ENCODE measurements at regions of chr9 and their contacts with region 1.

Region 1: GRCh38 chr9:91422758-91423711 is 597 bp downstream of the NFIL3 start:
- DNase-seq: peak; percentile 96
- H3K4me3 ChIP-seq: peak overlapping the region; percentile 67 to 85 (median 78)
- H3K27ac ChIP-seq: peak overlapping the region; percentile 94 to 98 (median 96)
- H3K4me1 ChIP-seq: peaks cover 0 to 45% (median 32%) of the 10 kb centered on the region in 4 donors
- H3K27me3 ChIP-seq: no peaks in the 10 kb centered on the region
- CTCF ChIP-seq: peak in 2 of 4 experiments; percentile 12 to 16
- EP300 ChIP-seq: peak; percentile 91 to 100 (median 99)
- POLR2A ChIP-seq: peak; percentile 20 to 26

Region 2: DNA sequence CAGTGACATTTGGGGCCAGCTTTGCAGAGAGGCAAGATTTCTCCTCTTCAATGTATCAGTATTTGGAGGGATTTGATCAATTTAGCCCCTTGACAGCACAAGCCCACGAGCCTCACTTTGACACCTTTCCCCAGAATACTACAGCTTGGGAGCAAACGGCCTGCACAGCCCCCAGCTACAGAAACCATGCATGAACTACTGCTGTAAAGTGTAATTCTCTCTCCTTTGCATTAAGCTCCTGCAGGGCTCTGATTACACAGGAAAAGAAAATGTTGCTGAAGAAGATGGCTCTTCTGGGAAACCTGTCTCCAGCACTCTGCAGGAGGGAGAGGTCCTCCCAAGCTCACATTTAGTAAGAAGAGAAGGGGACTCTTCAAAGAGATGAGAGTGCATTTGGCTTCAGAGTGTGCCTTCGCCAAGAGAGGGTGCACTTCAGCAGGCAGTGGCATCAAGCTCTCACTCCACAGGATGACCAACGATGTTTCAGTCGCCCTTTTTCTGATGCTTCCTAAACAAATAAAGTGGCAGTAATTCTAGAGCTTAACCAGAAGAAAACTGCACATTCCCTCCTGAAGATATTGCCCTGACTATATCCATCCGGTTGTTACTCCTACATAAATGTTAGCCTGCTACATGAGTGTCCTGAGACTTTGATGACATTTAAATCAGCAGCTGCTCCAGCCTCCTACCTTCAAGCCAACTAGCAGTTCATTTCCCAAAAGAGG is 333.5 kb before region 1 on chr9:
- intact Hi-C with region 1: loop called (anchors 5 kb)
- DNase-seq: peak; percentile 74
- H3K4me3 ChIP-seq: no peak overlapping the region
- H3K27ac ChIP-seq: no peak overlapping the region
- H3K4me1 ChIP-seq: peaks cover 0 to 7% (median 0%) of the 10 kb centered on the region in 4 donors
- H3K27me3 ChIP-seq: no peaks in the 10 kb centered on the region
- CTCF ChIP-seq: peak; percentile 32 to 59 (median 37)
- EP300 ChIP-seq: no peak
- POLR2A ChIP-seq: no peak

Region 3: GRCh38 chr9:91193658-91194391 is 229.2 kb before region 1 on chr9:
- intact Hi-C with region 1: loop called (anchors 1 kb)
- DNase-seq: peak; percentile 94
- H3K4me3 ChIP-seq: peak overlapping the region; percentile 30 to 52 (median 48)
- H3K27ac ChIP-seq: peak overlapping the region; percentile 94 to 99 (median 96)
- H3K4me1 ChIP-seq: peaks cover 0 to 63% (median 62%) of the 10 kb centered on the region in 4 donors
- H3K27me3 ChIP-seq: no peaks in the 10 kb centered on the region
- CTCF ChIP-seq: no peak
- EP300 ChIP-seq: peak in 2 of 4 donors; percentile 56 to 66
- POLR2A ChIP-seq: peak; percentile 41 to 46

Region 4: DNA sequence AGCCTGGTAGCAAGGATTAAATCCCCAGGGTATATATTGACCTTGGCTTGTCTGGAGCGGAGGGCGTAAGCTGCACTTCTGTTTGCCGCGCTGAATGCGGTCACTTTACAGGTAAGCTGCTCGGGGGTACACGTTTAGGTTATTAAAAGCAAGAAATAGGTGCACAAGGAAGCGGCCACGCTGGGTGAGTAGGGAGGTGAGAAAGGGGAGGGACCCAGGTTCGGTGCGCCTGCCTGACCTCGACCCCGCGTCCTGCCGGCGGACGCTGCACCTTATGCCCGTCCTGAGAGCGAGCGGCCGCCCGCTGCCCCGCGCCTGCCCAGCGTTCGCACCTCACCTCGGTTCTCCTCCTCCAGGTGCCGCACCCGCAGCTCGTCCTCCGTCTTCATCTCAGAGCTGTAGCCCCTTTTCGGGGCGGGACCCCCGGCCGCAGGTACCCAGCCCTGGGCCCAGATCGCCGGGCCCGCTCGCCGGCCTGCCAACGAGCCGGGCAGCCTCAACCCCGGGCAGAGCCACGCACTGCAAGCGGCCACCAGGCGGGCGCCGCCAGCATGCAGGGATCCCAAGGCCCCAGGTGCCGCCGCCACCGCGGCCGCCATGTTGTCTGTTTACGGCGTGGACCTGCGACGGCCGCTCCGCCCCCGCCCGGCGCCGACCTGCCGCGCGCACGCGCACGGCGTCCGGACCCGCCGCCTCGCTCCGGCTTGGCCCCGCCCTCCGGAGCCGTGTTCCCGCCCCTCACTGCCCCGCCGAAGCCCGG is 61.6 kb before region 1 on chr9 and contains the start of gene AUH:
- intact Hi-C with region 1: loop called (anchors 2 kb)
- DNase-seq: peak; percentile 92
- H3K4me3 ChIP-seq: peak within 1 kb of the TSS; percentile 75 to 99 (median 98)
- H3K27ac ChIP-seq: peak within 1 kb of the TSS; percentile 89 to 90 (median 90)
- H3K4me1 ChIP-seq: peaks cover 0 to 36% (median 18%) of the 10 kb centered on the region in 4 donors
- H3K27me3 ChIP-seq: no peaks in the 10 kb centered on the region
- CTCF ChIP-seq: peak in 1 of 4 experiments; percentile 9
- EP300 ChIP-seq: no peak
- POLR2A ChIP-seq: no peak
- total RNA-seq, gene AUH: 27.1 to 36.4 (median 28.1) TPM

Region 5: GRCh38 chr9:91374939-91375338 is 48.1 kb before region 1 on chr9:
- intact Hi-C with region 1: no loop called
- DNase-seq: no peak
- H3K4me3 ChIP-seq: no peak overlapping the region
- H3K27ac ChIP-seq: no peak overlapping the region
- H3K4me1 ChIP-seq: no peaks in the 10 kb centered on the region
- H3K27me3 ChIP-seq: no peaks in the 10 kb centered on the region
- CTCF ChIP-seq: no peak
- EP300 ChIP-seq: no peak
- POLR2A ChIP-seq: no peak

Region 6: DNA sequence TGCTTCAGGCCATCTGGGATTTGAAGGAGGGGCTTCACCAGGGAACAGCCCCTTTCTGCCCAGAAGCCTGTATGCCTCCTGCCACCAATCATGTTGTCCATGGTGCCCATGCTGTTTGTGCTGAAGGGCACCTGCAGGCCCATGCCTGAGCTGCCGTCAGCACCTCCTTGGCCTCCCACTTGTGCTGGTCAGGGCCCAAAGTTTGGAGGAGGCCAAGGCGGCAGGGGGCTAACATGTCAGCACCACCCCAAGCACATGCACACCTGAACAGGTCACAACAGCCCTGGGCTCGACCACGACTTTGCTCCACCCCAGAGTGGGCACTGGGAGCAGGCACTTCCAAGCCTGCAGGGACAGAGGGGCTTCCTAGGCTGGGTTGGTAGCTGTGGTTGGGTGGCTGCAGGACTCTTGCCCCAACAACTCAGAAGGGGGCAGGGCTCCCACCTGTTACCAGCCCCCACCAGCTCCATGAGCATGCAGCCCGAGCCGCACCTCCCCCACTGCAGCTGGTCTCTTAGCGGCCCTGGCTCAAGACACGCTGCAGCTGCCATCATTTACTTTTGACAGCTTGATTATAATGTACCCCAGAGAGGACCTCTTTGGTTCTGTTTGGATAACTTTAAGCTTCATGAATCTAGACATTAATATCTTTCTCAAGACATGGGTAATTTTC is 20.4 kb after region 1 on chr9:
- intact Hi-C with region 1: no loop called
- DNase-seq: no peak
- H3K4me3 ChIP-seq: no peak overlapping the region
- H3K27ac ChIP-seq: no peak overlapping the region
- H3K4me1 ChIP-seq: no peaks in the 10 kb centered on the region
- H3K27me3 ChIP-seq: no peaks in the 10 kb centered on the region
- CTCF ChIP-seq: no peak
- EP300 ChIP-seq: no peak
- POLR2A ChIP-seq: no peak

Region 7: DNA sequence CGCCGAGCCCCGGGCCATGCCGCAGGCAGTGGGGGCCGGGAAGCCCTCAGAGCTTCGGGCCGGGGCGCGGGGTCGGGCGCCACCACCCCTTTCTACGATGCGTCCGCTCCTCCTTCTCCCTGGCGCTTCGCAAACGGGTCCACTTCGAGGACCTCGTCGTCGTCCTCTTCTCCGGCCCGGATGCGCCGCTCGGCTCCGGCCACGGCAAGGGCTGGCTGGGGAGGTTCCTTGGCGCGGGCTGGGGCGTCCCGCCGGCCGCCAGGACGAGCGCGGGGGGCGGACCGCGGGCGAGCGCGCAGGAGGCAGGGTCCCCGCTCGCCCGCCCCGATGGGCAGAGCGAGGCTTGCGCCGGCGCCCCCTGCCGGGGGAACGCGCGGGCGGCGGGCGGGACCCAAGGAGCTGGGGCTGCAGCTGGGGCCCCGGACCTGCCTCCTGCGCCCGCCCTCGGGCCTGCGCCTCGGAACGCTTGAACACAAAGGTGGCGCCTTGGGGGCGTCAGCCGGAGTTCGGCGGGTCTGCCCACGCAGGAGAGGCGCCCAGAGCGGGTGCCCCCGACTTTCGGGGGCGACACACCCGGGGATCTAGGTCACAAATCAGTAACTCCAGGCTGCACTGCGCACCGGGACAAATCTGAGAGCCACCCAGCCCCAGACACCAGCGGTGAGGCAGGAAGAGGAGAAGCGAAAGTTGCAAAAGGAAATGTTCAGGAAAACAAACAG is 527.1 kb after region 1 on chr9 and contains the start of gene ROR2:
- intact Hi-C with region 1: loop called (anchors 5 kb)
- DNase-seq: peak; percentile 89
- H3K4me3 ChIP-seq: peak within 1 kb of the TSS; percentile 66 to 88 (median 76)
- H3K27ac ChIP-seq: peak within 1 kb of the TSS; percentile 88 to 95 (median 92)
- H3K4me1 ChIP-seq: peaks cover 0 to 44% (median 41%) of the 10 kb centered on the region in 4 donors
- H3K27me3 ChIP-seq: peaks cover 0 to 15% (median 0%) of the 10 kb centered on the region in 3 donors
- CTCF ChIP-seq: peak in 3 of 4 experiments; percentile 15 to 70 (median 36)
- EP300 ChIP-seq: no peak
- POLR2A ChIP-seq: peak; percentile 24 to 31
- total RNA-seq, gene ROR2: 51.4 to 81.7 (median 59.8) TPM

Measured in sigmoid colon (tissue), 7 donors.